ENCODE measurements at regions of chr9 and their contacts with region 1.

Region 1: DNA sequence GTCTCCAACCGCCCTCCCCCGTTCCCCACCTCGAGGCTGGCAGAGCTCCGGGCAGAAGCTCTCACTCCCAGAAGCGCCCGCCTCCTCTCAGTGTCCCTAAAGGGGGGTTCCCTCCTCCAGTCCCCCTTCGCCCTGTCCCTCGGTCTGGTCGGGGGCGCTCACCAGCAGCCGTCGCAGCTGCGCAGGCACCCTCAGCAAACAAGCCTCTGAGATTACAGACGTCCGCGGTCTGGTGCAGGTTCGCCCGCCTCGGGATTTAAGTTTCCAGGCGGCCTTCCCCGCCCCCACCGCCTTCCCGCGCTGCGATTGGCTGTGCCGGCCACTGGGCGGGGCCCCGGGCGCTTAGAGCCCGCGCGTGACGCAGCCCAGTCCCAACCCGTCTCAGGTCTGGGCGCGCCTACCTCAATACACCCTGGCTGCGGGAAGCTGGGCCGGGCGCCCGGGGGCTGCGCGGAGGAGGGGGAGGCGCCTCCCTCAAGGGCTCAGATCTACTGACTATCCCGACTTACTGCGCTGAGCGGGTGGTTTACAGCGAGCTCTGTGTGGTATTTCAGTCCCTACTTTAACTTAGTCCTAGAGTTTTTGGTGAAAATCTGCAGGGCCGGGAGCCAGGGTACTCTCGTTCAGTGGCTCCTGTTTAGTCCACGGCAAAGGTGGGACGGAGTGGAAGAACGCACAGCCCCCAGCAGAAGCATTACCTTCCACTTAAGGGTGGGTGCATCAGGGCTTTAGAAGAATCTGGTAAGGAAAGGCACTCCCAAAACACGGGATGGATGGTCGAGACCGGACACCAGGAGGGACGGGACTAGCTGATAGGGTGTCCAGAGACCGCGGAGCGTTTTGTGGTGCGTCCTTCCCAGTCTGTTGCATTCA is at the start of gene CTSV:
- DNase-seq: peak; percentile 91
- ATAC-seq: peak; percentile 100
- H3K4me3 Mint-ChIP-seq: peak within 1 kb of the TSS; percentile 77
- H3K27ac Mint-ChIP-seq: no peak within 1 kb of the TSS
- H3K4me1 Mint-ChIP-seq: peaks cover 3% of the 10 kb centered on the region
- H3K27me3 Mint-ChIP-seq: peaks cover 43% of the 10 kb centered on the region
- total RNA-seq, gene CTSV: 0.71 to 0.74 TPM

Region 2: GRCh38 chr9:96875461-96876364 is 163.4 kb before region 1 on chr9:
- CTCF ChIA-PET with region 1: no interaction called
- POLR2A ChIA-PET with region 1: no interaction called
- intact Hi-C with region 1: loop called in 1 of 2 experiments (anchors 10 kb)
- DNase-seq: peak; percentile 73
- ATAC-seq: peak; percentile 67
- H3K4me3 Mint-ChIP-seq: peak overlapping the region; percentile 76
- H3K27ac Mint-ChIP-seq: peak overlapping the region; percentile 87
- H3K4me1 Mint-ChIP-seq: peaks cover 26% of the 10 kb centered on the region
- H3K27me3 Mint-ChIP-seq: peaks cover 44% of the 10 kb centered on the region

Region 3: DNA sequence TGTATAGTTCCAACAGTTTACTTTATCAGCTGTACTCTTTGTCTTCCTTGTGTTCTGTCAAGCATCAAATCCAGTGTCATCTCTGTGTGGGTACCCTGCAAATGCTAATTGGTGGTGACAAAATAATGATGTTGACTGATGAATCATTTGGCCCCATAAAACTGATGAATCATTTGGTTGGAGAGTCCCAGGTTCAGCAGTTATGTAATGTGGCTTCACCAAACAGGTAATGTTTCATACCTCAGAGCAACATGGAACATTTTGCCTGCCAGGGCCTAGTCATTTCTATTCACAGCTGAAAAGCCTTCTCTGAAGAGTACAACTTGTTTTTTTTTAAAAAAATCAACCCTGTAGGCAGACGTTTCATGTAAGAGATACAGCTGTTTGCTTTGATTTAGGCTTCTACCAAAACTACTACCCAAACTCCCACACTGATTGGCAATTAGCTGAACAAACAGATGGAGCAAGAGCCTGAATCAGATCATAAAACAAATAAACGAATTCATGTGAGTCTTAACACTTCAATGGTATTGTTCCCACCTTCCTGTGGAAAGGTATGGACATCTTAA is 23.4 kb after region 1 on chr9:
- CTCF ChIA-PET with region 1: no interaction called
- POLR2A ChIA-PET with region 1: no interaction called
- intact Hi-C with region 1: loop called in 1 of 2 experiments (anchors 1 kb)
- DNase-seq: peak; percentile 69
- ATAC-seq: peak; percentile 88
- H3K4me3 Mint-ChIP-seq: no peak overlapping the region
- H3K27ac Mint-ChIP-seq: peak overlapping the region; percentile 42
- H3K4me1 Mint-ChIP-seq: peaks cover 13% of the 10 kb centered on the region
- H3K27me3 Mint-ChIP-seq: peaks cover 17% of the 10 kb centered on the region

Region 4: GRCh38 chr9:97096793-97097192 is 57.6 kb after region 1 on chr9:
- CTCF ChIA-PET with region 1: no interaction called
- POLR2A ChIA-PET with region 1: no interaction called
- intact Hi-C with region 1: no loop called
- DNase-seq: no peak
- ATAC-seq: no peak
- H3K4me3 Mint-ChIP-seq: no peak overlapping the region
- H3K27ac Mint-ChIP-seq: no peak overlapping the region
- H3K4me1 Mint-ChIP-seq: no peaks in the 10 kb centered on the region
- H3K27me3 Mint-ChIP-seq: peaks cover 12% of the 10 kb centered on the region